BJ (cell line): ENCODE measurements at regions of chr14 and their contacts with region 1.

Region 1: DNA sequence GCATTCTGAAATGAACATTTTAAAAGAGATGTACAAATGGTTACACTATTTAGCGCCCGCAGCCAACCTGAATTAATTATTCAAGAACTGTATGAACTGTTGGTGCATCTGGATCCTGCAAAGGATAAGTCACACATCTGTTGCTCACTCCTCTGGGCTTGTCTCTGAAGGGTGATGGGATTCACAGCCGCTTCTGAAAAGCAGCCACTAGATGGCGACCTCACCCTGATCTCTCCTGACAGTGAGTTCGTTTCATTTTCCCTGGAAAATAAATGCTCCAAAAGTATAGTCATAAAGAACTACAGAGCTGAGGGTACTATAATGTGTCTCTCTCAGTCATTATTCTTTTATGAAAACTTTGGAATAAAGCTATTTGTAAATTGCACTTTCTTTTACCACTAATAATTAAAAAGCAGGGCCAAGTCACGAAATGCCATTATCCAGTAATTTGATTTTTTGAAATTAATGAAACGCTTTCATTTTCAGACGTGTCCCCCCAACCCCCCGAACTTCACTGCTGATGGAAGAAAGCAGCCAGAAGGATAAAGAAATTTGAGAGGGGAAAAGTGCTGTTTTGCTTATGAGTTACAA is 789.6 kb downstream of the NRXN3 start:
- DNase-seq: peak; percentile 16
- H3K4me3 ChIP-seq: no peak overlapping the region
- H3K27me3 ChIP-seq: no peaks in the 10 kb centered on the region
- CTCF ChIP-seq: peak; percentile 88

Region 2: GRCh38 chr14:78933948-78934524 is 25.7 kb before region 1 on chr14:
- CTCF ChIA-PET with region 1: interaction called, 14 read pairs
- POLR2A ChIA-PET with region 1: no interaction called
- DNase-seq: no peak
- H3K4me3 ChIP-seq: no peak overlapping the region
- H3K27me3 ChIP-seq: no peaks in the 10 kb centered on the region
- CTCF ChIP-seq: peak; percentile 59

Region 3: DNA sequence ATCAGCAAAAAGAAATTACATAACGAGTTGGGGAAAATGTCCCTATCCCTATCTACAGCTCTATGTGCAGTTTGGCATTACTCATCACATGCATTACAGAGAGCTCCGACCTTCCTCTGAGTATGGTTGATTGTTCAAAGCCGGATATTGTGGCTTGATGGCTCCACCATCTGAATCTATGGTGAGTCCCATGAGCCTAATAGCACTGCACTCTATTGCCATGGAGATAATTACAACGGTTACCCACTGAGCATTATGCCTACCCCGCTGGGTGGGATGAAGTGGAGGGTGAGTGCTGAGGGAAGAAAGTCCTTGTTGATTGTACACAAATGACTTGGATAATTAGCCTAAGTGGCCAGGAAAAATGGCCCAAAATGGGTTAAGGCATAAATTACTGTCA is 10.9 kb after region 1 on chr14:
- CTCF ChIA-PET with region 1: interaction called, 16 read pairs
- POLR2A ChIA-PET with region 1: no interaction called
- DNase-seq: no peak
- H3K4me3 ChIP-seq: no peak overlapping the region
- H3K27me3 ChIP-seq: no peaks in the 10 kb centered on the region
- CTCF ChIP-seq: no peak